SK-N-SH (cell line): ENCODE measurements at regions of chr3 and their contacts with region 1.

Region 1: DNA sequence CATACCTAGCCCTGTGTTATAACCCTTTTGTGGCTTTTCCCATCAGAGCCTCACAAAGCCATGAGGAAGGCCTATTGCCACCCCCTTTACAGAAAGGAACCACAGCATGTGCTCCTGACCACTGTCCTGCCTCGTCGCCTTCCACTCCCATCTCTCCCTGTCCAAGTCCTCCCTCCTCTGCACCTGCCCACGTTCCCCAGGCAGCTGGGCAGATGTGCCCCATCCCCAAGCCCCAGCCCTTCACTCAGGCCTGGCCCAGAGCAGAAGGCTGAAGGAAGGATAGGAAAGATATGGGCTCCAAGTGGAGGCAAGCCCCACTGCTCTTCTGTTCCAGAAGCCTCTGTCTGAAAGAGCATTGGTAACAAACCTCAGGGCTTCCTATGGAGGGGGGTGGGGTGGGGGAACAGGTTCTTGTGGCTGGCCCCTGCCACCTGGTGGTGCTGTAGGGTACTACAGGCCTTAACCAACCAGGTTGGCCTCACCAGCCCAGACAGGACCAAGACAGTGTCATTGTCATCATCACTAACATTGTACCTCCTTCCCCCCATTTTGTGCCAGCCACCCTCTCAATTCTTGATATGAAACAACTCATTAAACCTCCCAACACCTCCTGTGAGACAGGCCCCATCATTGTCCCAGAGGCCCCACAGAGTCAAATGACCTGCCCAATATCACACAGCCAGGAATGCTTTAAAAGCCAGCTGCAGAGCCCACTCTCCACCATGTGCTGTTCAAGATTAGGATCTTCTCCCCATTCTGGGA is 10.0 kb downstream of the POC1A start:
- DNase-seq: peak; percentile 92
- H3K4me3 ChIP-seq: peak overlapping the region in 1 of 2 experiments; percentile 9; a peak in 1 of 4 replicates
- H3K27ac ChIP-seq: peak overlapping the region in 1 of 2 experiments; percentile 77; a peak in 2 of 4 replicates
- H3K4me1 ChIP-seq: peaks cover 0 to 13% of the 10 kb centered on the region in 2 experiments; a peak in 1 of 4 replicates
- H3K27me3 ChIP-seq: no peaks in the 10 kb centered on the region
- CTCF ChIP-seq: peak; percentile 89
- EP300 ChIP-seq: no peak
- RAD21 ChIP-seq: peak; percentile 95

Region 2: DNA sequence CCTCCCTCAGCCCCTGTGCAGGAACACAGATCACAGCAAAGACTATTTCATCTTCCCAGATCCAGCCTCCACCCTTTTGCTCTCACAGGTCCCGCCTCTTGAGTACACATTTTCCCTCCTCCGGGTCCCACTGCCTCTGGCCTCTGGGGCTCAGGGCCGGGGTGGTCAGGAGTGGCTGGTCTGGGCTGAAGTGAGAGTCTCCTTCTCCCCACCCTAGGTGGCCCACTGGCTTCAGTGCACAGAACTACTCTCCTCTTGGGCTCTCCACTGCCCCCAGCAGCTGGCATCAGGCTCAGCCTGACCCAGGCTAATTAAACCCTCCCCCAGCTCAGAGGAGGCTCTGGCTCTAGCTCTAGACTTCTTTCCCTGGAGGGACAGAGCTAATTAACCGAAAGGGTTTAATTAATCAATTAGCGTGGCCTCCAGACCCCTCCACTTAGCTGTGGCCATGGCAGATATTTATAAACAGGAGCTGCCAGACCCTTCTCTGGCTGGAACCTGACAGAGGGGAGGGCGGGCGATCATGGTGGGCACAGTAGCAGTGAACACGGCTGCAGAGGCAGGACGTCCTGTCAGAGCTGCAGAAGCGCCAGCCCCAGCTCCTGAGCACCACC is 103.0 kb before region 1 on chr3:
- CTCF ChIA-PET with region 1: interaction called, 10 read pairs
- POLR2A ChIA-PET with region 1: no interaction called
- DNase-seq: peak; percentile 93
- H3K4me3 ChIP-seq: no peak overlapping the region
- H3K27ac ChIP-seq: peak overlapping the region in 1 of 2 experiments; percentile 100; a peak in 2 of 4 replicates
- H3K4me1 ChIP-seq: peaks cover 18 to 87% of the 10 kb centered on the region in 2 experiments; a peak in 3 of 4 replicates
- H3K27me3 ChIP-seq: no peaks in the 10 kb centered on the region
- CTCF ChIP-seq: peak; percentile 52
- EP300 ChIP-seq: peak in 1 of 2 experiments; percentile 98; a peak in 2 of 4 replicates
- RAD21 ChIP-seq: peak; percentile 66

Region 3: DNA sequence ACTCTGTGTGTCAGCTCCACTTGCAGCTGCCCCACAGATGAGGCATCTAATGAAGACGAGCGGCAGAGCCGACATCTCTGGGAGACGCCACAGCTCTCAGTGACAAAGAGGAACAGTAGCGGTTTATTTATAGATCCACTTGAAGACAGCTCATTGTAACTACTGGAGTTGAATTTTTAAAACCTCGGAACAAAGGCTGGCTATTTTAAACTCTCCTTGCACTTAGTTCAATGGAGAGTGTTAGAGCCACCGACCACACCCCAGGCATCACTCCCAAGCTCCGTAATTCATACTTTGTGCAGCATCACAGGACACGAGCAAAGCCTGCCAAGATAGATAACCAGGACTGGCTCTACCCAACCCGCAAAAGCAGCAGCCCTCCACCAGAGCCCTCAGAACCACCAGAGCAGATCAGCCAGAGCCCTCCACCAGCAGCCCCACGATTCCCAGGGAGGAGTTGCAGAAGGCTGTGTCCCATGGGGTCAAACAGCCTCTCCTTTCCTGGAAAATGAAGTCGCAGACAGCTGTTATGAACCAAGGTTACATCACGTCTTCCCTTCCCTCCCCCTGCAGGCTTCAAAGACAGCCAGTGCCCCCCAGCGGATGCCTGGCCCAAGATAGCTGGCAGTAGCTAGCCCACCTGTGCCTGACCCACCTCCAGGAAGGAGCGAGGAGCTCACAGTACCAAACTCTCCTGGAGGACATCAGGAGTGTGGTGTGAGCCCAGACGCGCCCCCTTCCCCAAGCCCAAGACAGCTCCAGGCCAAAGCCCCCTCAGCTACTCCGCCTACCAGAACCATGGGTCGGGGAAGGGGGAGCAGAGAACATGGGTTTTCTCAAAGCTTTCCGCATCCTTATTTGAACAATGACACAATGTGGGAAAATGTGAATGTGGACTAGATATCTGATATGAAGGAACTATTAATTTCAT is 35.6 kb before region 1 on chr3:
- CTCF ChIA-PET with region 1: interaction called, 26 read pairs
- POLR2A ChIA-PET with region 1: no interaction called
- DNase-seq: peak; percentile 75
- H3K4me3 ChIP-seq: no peak overlapping the region
- H3K27ac ChIP-seq: peak overlapping the region in 1 of 2 experiments; percentile 96; a peak in 2 of 4 replicates
- H3K4me1 ChIP-seq: peaks cover 0 to 37% of the 10 kb centered on the region in 2 experiments; a peak in 2 of 4 replicates
- H3K27me3 ChIP-seq: no peaks in the 10 kb centered on the region
- CTCF ChIP-seq: no peak
- EP300 ChIP-seq: peak in 1 of 2 experiments; percentile 50; a peak in 1 of 4 replicates
- RAD21 ChIP-seq: no peak; the same call in 1 of the 2 replicates

Region 4: GRCh38 chr3:52130966-52131622 is 13.1 kb before region 1 on chr3:
- CTCF ChIA-PET with region 1: interaction called, 14 read pairs
- POLR2A ChIA-PET with region 1: no interaction called
- DNase-seq: no peak
- H3K4me3 ChIP-seq: no peak overlapping the region
- H3K27ac ChIP-seq: no peak overlapping the region
- H3K4me1 ChIP-seq: peaks cover 6 to 13% of the 10 kb centered on the region in 2 experiments; a peak in 2 of 4 replicates
- H3K27me3 ChIP-seq: no peaks in the 10 kb centered on the region
- CTCF ChIP-seq: no peak
- EP300 ChIP-seq: no peak
- RAD21 ChIP-seq: no peak